Naive thymus-derived CD4-positive, alpha-beta T cell (primary cell): ENCODE measurements at regions of chr5 and their contacts with region 1.

Region 1: DNA sequence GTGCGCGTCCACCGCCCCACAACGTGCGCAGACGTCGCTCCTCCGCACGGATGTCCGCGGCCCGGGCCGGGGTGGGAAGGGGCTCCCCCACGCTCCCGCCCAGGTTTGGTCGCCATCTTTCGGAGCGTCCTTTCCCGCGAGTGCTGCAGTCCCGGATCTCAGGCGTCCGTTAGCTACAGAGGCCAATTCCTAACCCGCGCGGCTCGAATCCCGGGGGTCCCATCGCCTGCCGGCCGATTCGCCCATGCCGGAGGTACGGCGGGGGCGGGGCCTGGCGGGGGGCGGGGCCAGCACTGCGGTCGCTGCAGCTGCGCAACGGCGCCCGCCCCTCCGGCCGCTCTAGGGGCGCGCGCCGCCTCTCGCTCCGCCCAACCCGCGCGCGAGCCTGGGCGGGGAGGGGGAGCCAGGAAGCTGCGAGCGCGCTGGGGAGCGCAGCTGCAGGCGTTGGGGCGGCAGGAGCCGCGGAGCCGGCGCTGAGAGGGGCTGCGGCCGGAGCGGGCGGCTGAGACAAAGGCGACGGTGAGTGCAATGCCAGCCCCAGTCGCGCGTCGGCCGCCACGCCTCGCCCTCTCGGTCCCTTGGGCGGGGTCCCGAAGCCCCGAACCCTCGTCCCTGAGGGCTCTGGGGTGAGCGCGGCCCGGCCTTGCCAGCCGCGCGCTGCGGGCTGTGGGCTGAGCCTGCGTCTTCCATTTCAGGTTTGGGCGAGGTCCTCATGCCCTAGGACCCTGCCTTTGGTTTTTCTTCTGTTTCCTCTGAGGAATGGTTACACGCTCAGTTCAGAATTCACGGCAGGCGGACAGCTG is at the start of gene CDC42SE2:
- DNase-seq: peak; percentile 81 to 95 (median 90)
- ATAC-seq: peak; percentile 94
- H3K4me3 ChIP-seq: peak within 1 kb of the TSS; percentile 87
- H3K4me3 Mint-ChIP-seq: peak within 1 kb of the TSS; percentile 80 to 97 (median 92)
- H3K27ac ChIP-seq: peak within 1 kb of the TSS; percentile 98
- H3K27ac Mint-ChIP-seq: peak within 1 kb of the TSS; percentile 88 to 98 (median 95)
- H3K4me1 ChIP-seq: peaks cover 36% of the 10 kb centered on the region in 2 donors
- H3K4me1 Mint-ChIP-seq: peaks cover 25 to 61% (median 47%) of the 10 kb centered on the region in 7 donors
- H3K27me3 ChIP-seq: no peaks in the 10 kb centered on the region
- H3K27me3 Mint-ChIP-seq: no peaks in the 10 kb centered on the region
- total RNA-seq, gene CDC42SE2: 143 to 265 (median 215) TPM

Region 2: DNA sequence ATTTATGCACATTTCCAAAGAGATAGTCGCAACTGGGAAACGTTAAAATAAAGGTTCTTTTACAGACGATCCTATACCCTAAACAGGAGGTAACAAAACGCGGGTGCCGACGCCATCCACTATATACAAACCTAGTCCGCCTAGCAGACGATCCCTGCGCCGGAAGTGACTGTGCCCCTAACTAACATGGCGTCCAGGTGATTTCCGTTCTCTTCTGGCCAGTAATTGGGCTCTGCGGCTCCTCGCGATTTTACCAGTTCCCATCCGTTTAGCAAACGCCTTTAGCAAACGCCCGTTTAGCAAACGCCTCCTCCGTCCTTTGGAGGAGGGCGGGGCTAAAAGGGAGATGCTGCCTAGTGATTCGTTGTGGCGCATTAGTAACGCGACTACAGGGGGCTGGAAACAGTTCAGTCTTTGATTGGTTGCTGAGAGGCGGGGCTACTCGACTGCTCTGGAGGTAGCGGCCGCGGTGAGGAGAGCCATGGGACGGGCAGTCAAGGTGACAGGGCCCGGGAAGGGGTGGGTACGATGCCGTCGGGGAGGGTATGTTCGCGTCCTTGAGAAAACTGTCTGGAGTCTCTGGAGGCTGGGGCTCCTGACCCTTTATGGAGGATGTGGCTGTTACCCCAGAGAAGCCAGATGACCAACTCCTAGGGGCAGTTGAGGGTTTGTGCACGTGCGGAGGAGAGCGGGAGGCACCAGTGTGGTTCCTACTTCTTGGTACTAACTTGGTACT is 93.1 kb before region 1 on chr5 and contains the start of gene LYRM7:
- CTCF ChIA-PET with region 1: interaction called, 9 read pairs
- POLR2A ChIA-PET with region 1: interaction called, 15 read pairs
- intact Hi-C with region 1: loop called (anchors 1 kb)
- DNase-seq: peak; percentile 70 to 99 (median 95)
- ATAC-seq: peak; percentile 98
- H3K4me3 ChIP-seq: peak within 1 kb of the TSS; percentile 74
- H3K4me3 Mint-ChIP-seq: peak within 1 kb of the TSS; percentile 95 to 100 (median 98)
- H3K27ac ChIP-seq: peak within 1 kb of the TSS; percentile 82
- H3K27ac Mint-ChIP-seq: peak within 1 kb of the TSS; percentile 92 to 98 (median 97)
- H3K4me1 ChIP-seq: peaks cover 11 to 16% of the 10 kb centered on the region in 2 donors
- H3K4me1 Mint-ChIP-seq: peaks cover 37 to 72% (median 63%) of the 10 kb centered on the region in 7 donors
- H3K27me3 ChIP-seq: no peaks in the 10 kb centered on the region
- H3K27me3 Mint-ChIP-seq: no peaks in the 10 kb centered on the region
- total RNA-seq, gene LYRM7: 8.2 to 18.8 (median 16.3) TPM

Region 3: DNA sequence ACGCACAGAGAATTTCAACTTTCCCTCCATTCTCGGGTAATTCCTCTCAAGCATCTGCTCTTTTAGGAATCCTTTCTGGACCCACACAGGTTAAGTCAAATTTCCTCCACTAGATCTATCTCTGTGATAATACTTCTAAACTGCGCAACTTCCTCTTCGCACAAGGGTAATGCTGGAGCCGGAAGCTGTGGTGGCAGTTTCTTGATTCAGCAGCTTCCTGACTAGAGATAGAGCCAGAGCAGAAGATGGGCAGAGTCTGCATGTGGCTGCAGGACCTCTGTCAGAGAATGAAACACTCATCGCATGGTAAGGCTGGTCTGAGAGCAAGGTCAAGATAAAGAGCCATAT is 11.1 kb before region 1 on chr5:
- CTCF ChIA-PET with region 1: interaction called, 34 read pairs
- POLR2A ChIA-PET with region 1: interaction called, 237 read pairs
- intact Hi-C with region 1: loop called (anchors 1 kb)
- DNase-seq: peak; percentile 41 to 90 (median 87)
- ATAC-seq: peak; percentile 93
- H3K4me3 ChIP-seq: peak overlapping the region; percentile 72
- H3K4me3 Mint-ChIP-seq: peak overlapping the region; percentile 80 to 97 (median 96)
- H3K27ac ChIP-seq: peak overlapping the region; percentile 78
- H3K27ac Mint-ChIP-seq: peak overlapping the region; percentile 91 to 97 (median 95)
- H3K4me1 ChIP-seq: peaks cover 51 to 54% of the 10 kb centered on the region in 2 donors
- H3K4me1 Mint-ChIP-seq: peaks cover 62 to 89% (median 67%) of the 10 kb centered on the region in 7 donors
- H3K27me3 ChIP-seq: no peaks in the 10 kb centered on the region
- H3K27me3 Mint-ChIP-seq: no peaks in the 10 kb centered on the region

Region 4: DNA sequence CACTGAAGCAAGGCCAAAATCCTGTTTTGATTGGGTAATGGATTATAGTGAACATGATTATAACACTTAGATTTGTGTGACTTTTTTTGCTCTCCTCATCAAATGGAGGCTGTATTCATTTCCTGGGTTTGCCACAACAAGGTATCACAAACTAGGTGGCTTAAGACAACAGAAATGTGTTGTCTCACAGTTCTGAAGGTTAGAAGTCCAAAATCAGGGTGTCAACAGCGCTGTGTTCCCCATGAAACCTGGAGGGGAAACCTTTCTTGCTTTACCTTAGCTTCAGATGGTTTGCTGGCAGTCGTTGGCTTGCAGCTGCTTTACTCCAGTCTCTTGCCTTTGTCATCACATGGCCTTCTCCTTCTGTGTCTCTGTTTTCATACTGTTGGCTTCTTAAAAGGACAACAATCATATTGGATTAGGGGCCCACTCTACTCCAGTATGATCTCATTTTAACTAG is 32.4 kb after region 1 on chr5:
- CTCF ChIA-PET with region 1: no interaction called
- POLR2A ChIA-PET with region 1: interaction called, 17 read pairs
- intact Hi-C with region 1: loop called in 1 of 2 experiments (anchors 5 kb)
- DNase-seq: peak in 1 of 9 donors; percentile 43
- ATAC-seq: peak; percentile 76
- H3K4me3 ChIP-seq: no peak overlapping the region
- H3K4me3 Mint-ChIP-seq: peak overlapping the region; percentile 56 to 76 (median 68)
- H3K27ac ChIP-seq: peak overlapping the region; percentile 40
- H3K27ac Mint-ChIP-seq: peak overlapping the region; percentile 72 to 90 (median 77)
- H3K4me1 ChIP-seq: peaks cover 59 to 88% of the 10 kb centered on the region in 2 donors
- H3K4me1 Mint-ChIP-seq: peaks cover 56 to 92% (median 76%) of the 10 kb centered on the region in 7 donors
- H3K27me3 ChIP-seq: no peaks in the 10 kb centered on the region
- H3K27me3 Mint-ChIP-seq: no peaks in the 10 kb centered on the region

Region 5: GRCh38 chr5:131364507-131365050 is 100.7 kb after region 1 on chr5:
- CTCF ChIA-PET with region 1: no interaction called
- POLR2A ChIA-PET with region 1: interaction called, 15 read pairs
- intact Hi-C with region 1: no loop called
- DNase-seq: peak in 6 of 9 donors; percentile 45 to 66 (median 57)
- ATAC-seq: peak; percentile 70
- H3K4me3 ChIP-seq: no peak overlapping the region
- H3K4me3 Mint-ChIP-seq: peak overlapping the region; percentile 34 to 70 (median 60)
- H3K27ac ChIP-seq: peak overlapping the region; percentile 61
- H3K27ac Mint-ChIP-seq: peak overlapping the region; percentile 78 to 97 (median 85)
- H3K4me1 ChIP-seq: peaks cover 34 to 40% of the 10 kb centered on the region in 2 donors
- H3K4me1 Mint-ChIP-seq: peaks cover 41 to 91% (median 79%) of the 10 kb centered on the region in 7 donors
- H3K27me3 ChIP-seq: no peaks in the 10 kb centered on the region
- H3K27me3 Mint-ChIP-seq: no peaks in the 10 kb centered on the region

Region 6: GRCh38 chr5:131417240-131417869 is 153.5 kb after region 1 on chr5:
- CTCF ChIA-PET with region 1: interaction called, 4 read pairs
- POLR2A ChIA-PET with region 1: interaction called, 14 read pairs
- intact Hi-C with region 1: loop called in 1 of 2 experiments (anchors 1 kb)
- DNase-seq: peak; percentile 61 to 78 (median 74)
- ATAC-seq: peak; percentile 81
- H3K4me3 ChIP-seq: no peak overlapping the region
- H3K4me3 Mint-ChIP-seq: peak overlapping the region in 7 of 10 donors; percentile 27 to 70 (median 45)
- H3K27ac ChIP-seq: peak overlapping the region; percentile 23
- H3K27ac Mint-ChIP-seq: peak overlapping the region; percentile 68 to 95 (median 81)
- H3K4me1 ChIP-seq: peaks cover 8 to 14% of the 10 kb centered on the region in 2 donors
- H3K4me1 Mint-ChIP-seq: peaks cover 17 to 52% (median 46%) of the 10 kb centered on the region in 7 donors
- H3K27me3 ChIP-seq: no peaks in the 10 kb centered on the region
- H3K27me3 Mint-ChIP-seq: no peaks in the 10 kb centered on the region

Region 7: DNA sequence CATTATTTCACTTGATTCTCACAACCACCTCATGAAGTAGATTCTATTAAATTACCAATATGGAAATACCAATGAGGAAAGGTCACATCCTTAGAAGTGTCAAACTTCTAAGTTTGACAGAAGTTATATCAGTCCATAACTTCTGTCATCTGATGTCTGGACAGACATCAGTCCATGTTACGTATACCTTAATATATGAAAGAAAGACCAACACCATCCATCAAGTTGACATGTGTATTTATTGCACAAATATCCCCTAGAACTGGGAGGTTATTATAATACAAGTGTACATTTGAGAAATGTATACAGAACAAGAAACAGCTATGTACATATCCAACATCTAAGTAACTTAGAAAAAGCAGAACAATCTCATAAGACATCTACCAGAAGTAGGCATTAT is 377.6 kb after region 1 on chr5:
- CTCF ChIA-PET with region 1: no interaction called
- POLR2A ChIA-PET with region 1: no interaction called
- intact Hi-C with region 1: no loop called
- DNase-seq: no peak
- ATAC-seq: no peak
- H3K4me3 ChIP-seq: no peak overlapping the region
- H3K4me3 Mint-ChIP-seq: no peak overlapping the region
- H3K27ac ChIP-seq: peak overlapping the region; percentile 64
- H3K27ac Mint-ChIP-seq: peak overlapping the region in 7 of 9 donors; percentile 77 to 97 (median 94)
- H3K4me1 ChIP-seq: peaks cover 4 to 19% of the 10 kb centered on the region in 2 donors
- H3K4me1 Mint-ChIP-seq: peaks cover 12 to 48% (median 29%) of the 10 kb centered on the region in 7 donors
- H3K27me3 ChIP-seq: no peaks in the 10 kb centered on the region
- H3K27me3 Mint-ChIP-seq: no peaks in the 10 kb centered on the region